ENCODE measurements at regions of chr10 and their contacts with region 1.

Region 1: GRCh38 chr10:14954001-14954770 is at the start of gene DCLRE1C:
- DNase-seq: peak; percentile 97
- total RNA-seq, gene DCLRE1C: 8.7 to 12.0 TPM

Region 2: DNA sequence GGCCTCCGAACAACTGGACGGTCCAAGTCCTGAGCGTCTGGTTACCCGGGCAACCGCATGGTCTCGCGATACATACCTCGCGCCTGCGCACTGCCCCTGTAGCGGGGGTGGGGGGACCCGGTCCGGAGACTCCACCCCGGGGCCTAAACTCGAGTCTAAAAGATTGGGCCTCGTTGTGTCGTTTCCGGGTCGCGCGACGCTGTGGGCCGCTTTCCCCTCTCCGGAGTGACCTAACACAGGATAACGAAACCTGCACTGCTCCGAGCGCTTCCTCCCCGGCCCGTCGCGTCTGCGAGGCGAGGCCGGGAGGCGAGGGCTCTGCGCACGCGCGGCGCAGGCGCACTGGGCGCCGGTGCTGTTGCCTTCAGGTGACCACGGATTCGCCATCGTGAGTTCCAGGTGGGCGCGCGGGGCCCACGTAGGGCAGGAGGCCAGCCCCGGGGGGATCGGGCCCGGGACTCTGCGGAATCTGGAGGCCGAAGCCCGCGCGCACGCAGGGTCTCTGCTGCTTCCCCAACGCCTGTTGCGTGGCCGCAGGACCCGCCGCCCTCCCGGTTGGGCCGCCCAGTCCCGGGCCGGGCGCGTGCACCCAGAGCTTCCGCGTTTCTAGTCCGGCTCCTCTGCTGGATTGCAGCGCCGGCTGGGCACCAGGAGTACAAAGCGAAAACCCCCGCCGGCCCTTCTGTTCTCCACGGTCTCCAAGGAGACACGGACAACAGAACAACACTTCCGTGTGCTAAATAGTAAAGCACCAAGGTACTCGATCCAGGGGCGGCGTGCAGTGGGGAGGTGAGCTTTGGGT is 143.0 kb after region 1 on chr10 and contains the start of gene RPP38:
- intact Hi-C with region 1: loop called (anchors 5 to 10 kb)
- DNase-seq: peak; percentile 99
- total RNA-seq, gene RPP38: 10.0 to 11.2 TPM

Measured in posterior vena cava (tissue), 2 donors.